HepG2 (cell line): ENCODE measurements at regions of chr14 and their contacts with region 1.

Region 1: GRCh38 chr14:70714055-70714621 is 72.4 kb downstream of the TTC9 start:
- DNase-seq: peak; percentile 57
- ATAC-seq: no peak
- H3K4me3 ChIP-seq: no peak overlapping the region
- H3K27ac ChIP-seq: no peak overlapping the region
- H3K4me1 ChIP-seq: peaks cover 33% of the 10 kb centered on the region
- H3K27me3 ChIP-seq: peaks cover 0 to 2% of the 10 kb centered on the region in 2 experiments; a peak in 1 of 5 replicates
- CTCF ChIP-seq: peak; percentile 51
- EP300 ChIP-seq: no peak
- POLR2A ChIP-seq: no peak
- RAD21 ChIP-seq: no peak

Region 2: GRCh38 chr14:70640938-70641547 is 73.1 kb before region 1 on chr14:
- CTCF ChIA-PET with region 1: no interaction called
- POLR2A ChIA-PET with region 1: no interaction called
- in situ Hi-C with region 1: loop called (anchors 5 kb)
- intact Hi-C with region 1: no loop called
- DNase-seq: no peak
- ATAC-seq: peak; percentile 79
- H3K4me3 ChIP-seq: peak overlapping the region; percentile 39 to 73 (median 67); a peak in 5 of 6 replicates
- H3K27ac ChIP-seq: no peak overlapping the region
- H3K4me1 ChIP-seq: peaks cover 12% of the 10 kb centered on the region; the same call in 1 of the 2 replicates
- H3K27me3 ChIP-seq: peaks cover 9 to 44% of the 10 kb centered on the region in 2 experiments
- CTCF ChIP-seq: no peak
- EP300 ChIP-seq: no peak
- POLR2A ChIP-seq: no peak
- RAD21 ChIP-seq: no peak

Region 3: GRCh38 chr14:70816525-70816924 is 102.4 kb after region 1 on chr14:
- CTCF ChIA-PET with region 1: interaction called, 6 read pairs
- POLR2A ChIA-PET with region 1: no interaction called
- in situ Hi-C with region 1: no loop called
- intact Hi-C with region 1: loop called (anchors 2 kb)
- DNase-seq: no peak
- ATAC-seq: no peak
- H3K4me3 ChIP-seq: no peak overlapping the region
- H3K27ac ChIP-seq: no peak overlapping the region
- H3K4me1 ChIP-seq: peaks cover 28% of the 10 kb centered on the region
- H3K27me3 ChIP-seq: peaks cover 0 to 22% of the 10 kb centered on the region in 2 experiments; a peak in 2 of 5 replicates
- CTCF ChIP-seq: no peak
- EP300 ChIP-seq: no peak
- POLR2A ChIP-seq: no peak
- RAD21 ChIP-seq: no peak

Region 4: GRCh38 chr14:70873627-70874026 is 159.5 kb after region 1 on chr14:
- CTCF ChIA-PET with region 1: no interaction called
- POLR2A ChIA-PET with region 1: no interaction called
- in situ Hi-C with region 1: no loop called
- intact Hi-C with region 1: no loop called
- DNase-seq: peak; percentile 38
- ATAC-seq: peak; percentile 84
- H3K4me3 ChIP-seq: no peak overlapping the region
- H3K27ac ChIP-seq: no peak overlapping the region
- H3K4me1 ChIP-seq: peaks cover 11% of the 10 kb centered on the region
- H3K27me3 ChIP-seq: peaks cover under 1 to 1% of the 10 kb centered on the region in 2 experiments; a peak in 3 of 5 replicates
- CTCF ChIP-seq: peak; percentile 49
- EP300 ChIP-seq: no peak
- POLR2A ChIP-seq: no peak
- RAD21 ChIP-seq: no peak